ENCODE measurements at regions of chr17 and their contacts with region 1.

Region 1: DNA sequence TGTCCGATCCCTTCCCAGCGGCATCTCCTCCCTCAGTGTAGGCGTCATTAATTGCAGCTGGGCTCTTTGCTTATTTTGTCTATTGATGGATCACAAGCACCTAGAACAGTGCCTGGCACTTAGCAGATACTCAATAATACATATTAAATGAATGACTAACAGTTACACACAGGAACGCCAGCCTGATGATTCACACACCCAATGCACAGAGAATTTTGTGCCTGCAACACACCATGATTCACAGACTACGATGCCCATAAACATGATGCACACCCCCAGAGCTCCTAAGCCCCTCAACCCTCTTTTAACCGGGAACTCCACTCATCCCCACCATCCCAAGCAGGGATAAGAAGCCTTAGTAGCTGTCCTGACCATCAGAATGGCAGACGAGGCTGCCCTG is 66.6 kb upstream of the TMEM97 start:
- DNase-seq: no peak
- CTCF ChIP-seq: no peak

Region 2: DNA sequence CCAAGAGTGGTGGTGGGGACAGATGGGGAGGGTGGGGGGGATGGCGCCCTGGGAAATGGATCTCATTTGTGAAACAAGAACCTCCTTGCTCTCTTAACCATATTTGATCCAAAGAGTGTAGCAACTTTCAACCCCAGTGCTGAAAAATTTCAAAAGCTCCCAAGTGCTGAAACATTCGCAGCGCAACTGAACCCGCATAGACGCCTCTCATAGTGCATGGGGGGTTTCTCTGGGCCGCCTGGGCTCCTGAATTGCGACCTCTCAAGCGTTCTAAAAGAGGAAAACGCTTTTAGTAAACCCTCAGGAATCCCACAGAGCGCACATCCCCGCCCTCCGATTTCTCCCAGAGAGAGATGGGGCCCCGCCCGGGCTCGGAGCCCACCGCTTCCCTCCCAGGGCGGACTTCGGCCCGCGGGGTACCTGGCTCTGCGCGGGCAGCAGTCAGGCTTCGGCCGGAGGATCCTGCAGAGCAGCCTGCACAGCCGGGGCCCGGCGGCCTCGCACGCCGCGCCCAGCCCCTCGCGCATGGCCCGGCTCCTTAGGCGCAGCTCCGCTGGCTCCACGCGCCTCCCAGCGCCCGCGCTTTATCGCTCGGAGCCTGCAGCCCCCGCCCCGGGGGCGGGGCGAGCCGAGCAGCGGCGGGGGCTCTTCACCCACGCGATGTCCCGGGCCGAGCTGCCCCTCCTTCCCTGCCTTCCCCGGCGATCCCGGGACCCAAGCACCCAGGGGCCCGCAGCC is 459.1 kb before region 1 on chr17:
- in situ Hi-C with region 1: loop called (anchors 25 kb)
- DNase-seq: no peak
- CTCF ChIP-seq: no peak

Region 3: GRCh38 chr17:28335201-28335955 is 82.9 kb after region 1 on chr17 and contains the starts of genes IFT20 and TNFAIP1:
- in situ Hi-C with region 1: no loop called
- DNase-seq: peak; percentile 98
- CTCF ChIP-seq: no peak

Measured in GM13976 (cell line).